Right lobe of liver (tissue), 6 donors: ENCODE measurements at regions of chr12 and their contacts with region 1.

Region 1: GRCh38 chr12:109052414-109053323 is at the start of gene USP30:
- DNase-seq: peak; percentile 83 to 85 (median 85)
- ATAC-seq: peak; percentile 86 to 92 (median 89)
- H3K4me3 ChIP-seq: peak within 1 kb of the TSS; percentile 75 to 97 (median 96)
- H3K27ac ChIP-seq: peak within 1 kb of the TSS; percentile 92 to 96 (median 94)
- H3K4me1 ChIP-seq: peaks cover 0 to 34% (median 12%) of the 10 kb centered on the region in 4 donors
- H3K27me3 ChIP-seq: no peaks in the 10 kb centered on the region
- CTCF ChIP-seq: no peak
- POLR2A ChIP-seq: peak; percentile 44
- total RNA-seq, gene USP30: 6.4 to 17.6 (median 11.0) TPM

Region 2: DNA sequence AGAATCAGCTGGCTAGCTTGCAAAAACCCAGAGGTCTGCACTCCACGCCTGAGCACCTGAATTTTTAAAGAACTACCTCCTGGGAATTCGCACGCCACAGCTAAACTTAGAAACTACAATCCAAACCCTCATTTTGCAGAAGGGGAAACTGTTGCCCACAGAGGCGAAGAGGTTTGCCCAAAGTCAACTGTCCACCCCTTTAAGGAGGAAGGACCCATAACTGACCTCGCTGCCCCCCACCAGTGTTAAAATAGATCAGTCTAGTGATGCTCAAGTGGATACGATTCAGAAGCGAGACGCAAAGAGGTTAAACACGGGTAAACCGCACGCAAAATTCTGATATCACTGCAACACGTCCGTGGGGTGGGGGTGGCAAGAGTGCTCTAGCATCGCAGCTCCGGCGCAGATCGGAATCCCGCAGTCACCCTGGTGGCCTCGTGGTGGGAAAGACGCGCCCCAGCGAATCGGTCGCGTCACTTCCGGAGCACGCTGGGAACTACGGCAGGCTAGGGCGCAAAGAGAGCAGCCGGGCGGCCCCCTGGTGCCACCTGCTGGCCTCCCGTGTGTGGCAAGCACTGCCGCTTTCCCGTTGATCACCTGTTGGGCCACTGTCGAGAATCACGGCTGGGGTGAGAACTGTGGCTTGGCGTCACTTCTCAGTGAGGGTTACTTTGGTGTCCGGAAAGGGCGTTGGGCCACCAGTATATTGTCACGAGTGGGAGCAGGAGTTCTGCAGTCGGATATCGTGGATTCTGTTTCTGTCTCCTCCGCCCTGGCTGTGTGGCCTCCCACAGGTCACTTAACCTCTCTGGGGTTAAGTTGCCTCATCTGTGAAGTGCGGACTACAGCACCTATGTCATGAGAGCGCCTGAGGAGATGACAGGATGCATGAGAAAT is 40.6 kb after region 1 on chr12 and contains the start of gene ALKBH2:
- intact Hi-C with region 1: loop called in 1 of 2 experiments (anchors 5 kb)
- DNase-seq: peak; percentile 94
- ATAC-seq: peak; percentile 82 to 84 (median 83)
- H3K4me3 ChIP-seq: peak within 1 kb of the TSS; percentile 40 to 65 (median 55)
- H3K27ac ChIP-seq: peak within 1 kb of the TSS; percentile 36 to 65 (median 65)
- H3K4me1 ChIP-seq: peaks cover 0 to 37% (median 2%) of the 10 kb centered on the region in 4 donors
- H3K27me3 ChIP-seq: no peaks in the 10 kb centered on the region
- CTCF ChIP-seq: peak; percentile 98 to 99 (median 98)
- POLR2A ChIP-seq: peak; percentile 77
- total RNA-seq, gene ALKBH2: 6.1 to 19.3 (median 17.1) TPM

Region 3: GRCh38 chr12:109488051-109488665 is 435.5 kb after region 1 on chr12:
- intact Hi-C with region 1: no loop called
- DNase-seq: no peak
- ATAC-seq: no peak
- H3K4me3 ChIP-seq: no peak overlapping the region
- H3K27ac ChIP-seq: no peak overlapping the region
- H3K4me1 ChIP-seq: no peaks in the 10 kb centered on the region
- H3K27me3 ChIP-seq: no peaks in the 10 kb centered on the region
- CTCF ChIP-seq: no peak
- POLR2A ChIP-seq: no peak